ENCODE measurements at regions of chrX and their contacts with region 1.

Region 1: GRCh38 chrX:103845165-103845653 is 13.2 kb upstream of the RAB9B start:
- DNase-seq: peak; percentile 28
- CTCF ChIP-seq: peak; percentile 60

Region 2: GRCh38 chrX:103533511-103534216 is 311.5 kb before region 1 on chrX:
- CTCF ChIA-PET with region 1: no interaction called
- POLR2A ChIA-PET with region 1: no interaction called
- DNase-seq: peak; percentile 17
- CTCF ChIP-seq: peak; percentile 72

Region 3: DNA sequence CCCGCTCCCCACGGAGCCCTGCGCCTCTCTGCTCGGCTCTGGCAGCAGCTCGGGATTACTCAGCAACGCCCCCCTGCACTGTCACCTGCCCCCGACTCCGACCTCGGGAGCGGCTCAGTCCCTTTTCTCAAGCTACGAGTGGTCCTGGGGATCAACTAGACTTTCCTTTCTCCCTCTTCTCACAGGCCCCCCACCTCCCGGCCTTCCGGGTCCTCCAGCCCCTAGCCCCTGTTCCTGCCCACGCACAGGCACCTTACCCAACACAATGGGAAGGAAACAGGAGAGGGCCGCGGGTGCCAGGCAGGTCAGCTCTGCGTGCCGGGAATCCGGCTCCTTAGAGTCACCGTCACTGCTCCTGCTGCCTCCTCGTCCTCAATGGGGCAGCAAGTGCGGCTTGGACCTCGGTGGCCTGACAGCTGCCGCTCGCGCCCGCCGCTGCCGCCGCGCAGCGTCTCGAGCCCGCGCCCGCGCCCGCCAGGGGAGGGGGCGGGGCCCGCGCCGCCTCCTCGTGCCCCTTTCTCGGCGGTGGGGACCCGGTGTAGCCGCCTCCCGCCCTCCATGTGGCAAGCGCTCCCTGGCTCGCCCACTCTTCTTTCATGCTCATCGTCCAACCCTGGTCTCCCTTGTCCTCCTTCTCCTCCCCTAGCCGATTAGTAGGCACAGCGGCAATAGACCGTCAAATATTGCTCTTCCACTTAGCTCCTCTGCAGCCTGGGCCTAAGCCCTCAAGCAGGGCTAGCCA is 13.2 kb before region 1 on chrX and contains the start of gene RAB9B:
- CTCF ChIA-PET with region 1: interaction called, 25 read pairs
- POLR2A ChIA-PET with region 1: no interaction called
- DNase-seq: peak; percentile 70
- CTCF ChIP-seq: no peak

Region 4: GRCh38 chrX:103861200-103861599 is 16.0 kb after region 1 on chrX:
- CTCF ChIA-PET with region 1: interaction called, 11 read pairs
- POLR2A ChIA-PET with region 1: no interaction called
- DNase-seq: no peak
- CTCF ChIP-seq: no peak

Region 5: GRCh38 chrX:103941201-103941975 is 96.2 kb after region 1 on chrX:
- CTCF ChIA-PET with region 1: interaction called, 23 read pairs
- POLR2A ChIA-PET with region 1: no interaction called
- DNase-seq: no peak
- CTCF ChIP-seq: peak; percentile 17

Region 6: GRCh38 chrX:104136241-104137019 is 291.2 kb after region 1 on chrX:
- CTCF ChIA-PET with region 1: interaction called, 19 read pairs
- POLR2A ChIA-PET with region 1: no interaction called
- DNase-seq: peak; percentile 52
- CTCF ChIP-seq: peak; percentile 61

Region 7: DNA sequence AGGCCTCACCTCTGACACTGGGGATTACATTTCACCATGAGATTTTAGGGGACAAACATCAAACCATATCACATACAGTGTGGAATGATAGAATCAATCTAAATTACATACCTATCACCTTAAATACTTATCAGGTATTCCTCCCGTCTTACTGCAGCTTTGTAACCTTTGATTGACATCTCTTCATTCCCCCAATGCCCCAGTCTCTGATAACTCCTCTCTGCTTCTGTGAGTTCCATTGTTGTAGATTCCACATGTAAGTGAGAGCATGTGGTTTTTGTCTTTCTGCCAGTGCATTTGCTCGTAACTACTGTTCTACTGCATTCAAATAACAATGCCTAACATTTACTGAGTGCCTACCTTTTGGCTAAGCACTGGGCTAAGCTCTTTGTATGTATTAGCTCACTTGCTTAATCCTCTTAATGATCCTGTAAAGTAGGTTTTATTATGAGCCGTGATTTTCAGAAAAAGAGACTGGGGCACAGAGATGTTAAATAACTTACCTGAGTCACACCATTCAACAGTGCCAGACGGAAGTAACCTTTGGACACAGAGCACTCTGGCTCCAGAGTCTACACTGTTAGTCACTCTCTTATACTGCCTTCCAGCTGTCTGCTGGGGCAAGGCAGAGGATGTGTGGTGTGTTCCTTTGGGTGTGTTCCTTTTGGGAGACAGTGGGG is 473.3 kb after region 1 on chrX:
- CTCF ChIA-PET with region 1: no interaction called
- POLR2A ChIA-PET with region 1: no interaction called
- DNase-seq: no peak
- CTCF ChIP-seq: no peak

Measured in GM10248 (cell line).